ENCODE measurements at regions of chr14 and their contacts with region 1.

Region 1: GRCh38 chr14:95993768-95994592 is 45.2 kb upstream of the C14orf132 start:
- DNase-seq: no peak
- H3K4me3 ChIP-seq: no peak overlapping the region
- H3K27ac ChIP-seq: no peak overlapping the region
- H3K4me1 ChIP-seq: no peaks in the 10 kb centered on the region
- H3K27me3 ChIP-seq: peaks cover 0 to 13% of the 10 kb centered on the region in 2 donors
- CTCF ChIP-seq: peak; percentile 67 to 75

Region 2: GRCh38 chr14:95561001-95561412 is 433.0 kb before region 1 on chr14:
- intact Hi-C with region 1: loop called (anchors 5 kb)
- DNase-seq: peak; percentile 71 to 80
- H3K4me3 ChIP-seq: no peak overlapping the region
- H3K27ac ChIP-seq: no peak overlapping the region
- H3K4me1 ChIP-seq: no peaks in the 10 kb centered on the region
- H3K27me3 ChIP-seq: no peaks in the 10 kb centered on the region
- CTCF ChIP-seq: peak; percentile 83 to 90

Region 3: DNA sequence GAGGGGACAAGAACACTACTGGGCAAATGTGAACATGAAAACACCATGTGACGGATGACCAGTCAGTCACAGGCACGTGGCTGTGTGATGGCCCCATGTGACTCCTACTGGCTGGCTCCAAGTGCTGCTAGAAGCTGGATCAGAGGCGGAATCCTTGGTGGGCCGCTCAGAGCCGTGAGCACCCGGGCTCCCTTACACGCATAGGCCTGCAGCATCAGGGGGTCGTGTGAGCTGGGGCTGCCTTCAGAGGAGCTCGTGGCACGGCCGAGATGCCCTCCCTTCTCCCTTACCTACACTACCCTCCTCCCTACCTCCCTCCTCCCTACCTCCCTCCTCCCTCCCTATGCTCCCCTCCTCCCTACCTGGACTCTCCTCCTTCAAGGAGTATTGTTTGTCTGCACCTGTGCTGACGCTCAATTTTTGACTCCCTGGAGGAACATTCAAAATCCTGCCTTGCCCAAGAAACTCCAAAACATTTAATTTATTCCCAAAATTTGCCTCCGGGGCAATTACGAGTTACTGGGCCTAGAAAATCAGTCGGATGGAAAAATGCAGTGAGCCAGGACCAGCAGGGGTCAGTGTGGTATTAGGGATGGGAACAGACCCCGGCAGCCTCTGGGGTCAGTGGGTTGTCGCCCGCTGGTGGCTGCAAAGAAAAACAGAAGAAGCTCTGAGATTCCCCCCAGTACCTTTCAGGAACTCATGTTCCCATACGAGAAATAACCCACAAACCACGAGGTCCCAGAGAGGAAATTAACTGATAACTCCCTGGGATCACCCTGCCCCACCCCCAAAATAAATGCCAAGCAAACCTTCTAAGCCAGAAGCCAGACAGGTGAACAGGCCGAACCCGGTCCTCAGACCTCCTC is 106.4 kb after region 1 on chr14:
- intact Hi-C with region 1: loop called (anchors 5 kb)
- DNase-seq: peak; percentile 70 to 81
- H3K4me3 ChIP-seq: no peak overlapping the region
- H3K27ac ChIP-seq: no peak overlapping the region
- H3K4me1 ChIP-seq: peaks cover 0 to 7% (median 2%) of the 10 kb centered on the region in 4 donors
- H3K27me3 ChIP-seq: peaks cover 0 to 17% of the 10 kb centered on the region in 2 donors
- CTCF ChIP-seq: peak; percentile 55 to 61

Region 4: DNA sequence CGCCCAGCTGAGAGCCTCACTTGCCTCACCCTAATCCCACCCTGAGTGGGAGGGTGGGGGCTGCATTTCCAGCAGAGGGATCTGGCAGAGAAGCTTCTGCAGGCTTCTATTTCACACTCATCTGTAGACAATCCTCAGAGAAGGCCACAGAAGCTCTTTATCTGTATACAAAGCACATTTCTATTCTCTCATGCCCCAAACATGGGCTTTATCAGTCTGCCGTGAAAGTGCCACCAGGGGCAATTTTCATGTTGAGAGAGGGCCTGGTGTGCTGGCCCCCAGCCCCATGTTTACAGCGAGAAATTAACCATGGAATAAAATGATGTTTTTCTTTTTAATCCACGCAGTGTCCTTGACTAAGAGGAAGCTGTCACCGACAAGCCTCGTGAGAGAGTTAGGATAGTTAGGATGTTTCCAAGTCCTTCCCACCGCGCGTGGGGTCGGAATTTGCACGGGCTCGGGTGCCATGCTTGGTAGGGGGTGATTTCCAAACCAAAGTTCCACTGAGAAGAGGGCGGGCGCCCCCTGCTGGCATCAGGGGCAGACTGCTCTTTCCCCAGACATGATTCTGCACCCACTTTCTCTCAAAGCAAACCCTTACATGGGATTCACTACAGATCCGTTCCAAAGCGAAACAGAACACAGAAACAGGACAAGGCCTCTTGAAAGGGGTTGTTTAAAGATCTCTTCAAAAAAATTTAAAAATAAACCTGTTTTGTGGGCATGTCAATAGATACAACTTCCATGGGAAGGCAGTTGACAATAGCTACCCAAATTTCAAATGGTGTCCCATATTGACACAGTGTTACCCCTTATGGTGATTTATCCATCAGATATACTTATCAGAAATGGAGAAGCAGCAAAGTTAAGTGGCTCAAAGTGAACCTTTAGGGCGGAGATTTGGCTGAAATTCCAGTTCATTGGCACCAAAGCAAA is 281.5 kb after region 1 on chr14:
- intact Hi-C with region 1: loop called (anchors 5 kb)
- DNase-seq: peak; percentile 68 to 79
- H3K4me3 ChIP-seq: no peak overlapping the region
- H3K27ac ChIP-seq: no peak overlapping the region
- H3K4me1 ChIP-seq: peaks cover 0 to 9% (median 2%) of the 10 kb centered on the region in 4 donors
- H3K27me3 ChIP-seq: no peaks in the 10 kb centered on the region
- CTCF ChIP-seq: peak; percentile 74 to 81